ENCODE measurements at regions of chr6 and their contacts with region 1.

Region 1: GRCh38 chr6:73566954-73567591 is 46.2 kb upstream of the EEF1A1 start:
- DNase-seq: peak; percentile 96
- ATAC-seq: peak; percentile 86
- H3K4me3 ChIP-seq: peak overlapping the region; percentile 31 to 59 (median 32); a peak in 5 of 6 replicates
- H3K27ac ChIP-seq: peak overlapping the region; percentile 90
- H3K4me1 ChIP-seq: peaks cover 61% of the 10 kb centered on the region
- H3K27me3 ChIP-seq: no peaks in the 10 kb centered on the region
- CTCF ChIP-seq: no peak
- EP300 ChIP-seq: peak; percentile 77 to 83; a peak in 3 of 4 replicates
- POLR2A ChIP-seq: peak; percentile 66 to 67
- RAD21 ChIP-seq: no peak

Region 2: GRCh38 chr6:73481969-73482368 is 85.1 kb before region 1 on chr6:
- CTCF ChIA-PET with region 1: no interaction called
- POLR2A ChIA-PET with region 1: no interaction called
- in situ Hi-C with region 1: no loop called
- intact Hi-C with region 1: no loop called
- DNase-seq: no peak
- ATAC-seq: no peak
- H3K4me3 ChIP-seq: no peak overlapping the region
- H3K27ac ChIP-seq: no peak overlapping the region
- H3K4me1 ChIP-seq: no peaks in the 10 kb centered on the region
- H3K27me3 ChIP-seq: no peaks in the 10 kb centered on the region
- CTCF ChIP-seq: no peak
- EP300 ChIP-seq: no peak
- POLR2A ChIP-seq: no peak
- RAD21 ChIP-seq: no peak

Region 3: GRCh38 chr6:73515204-73515655 is 51.8 kb before region 1 on chr6:
- CTCF ChIA-PET with region 1: no interaction called
- POLR2A ChIA-PET with region 1: interaction called, 130 read pairs
- in situ Hi-C with region 1: no loop called
- intact Hi-C with region 1: loop called (anchors 5 kb)
- DNase-seq: no peak
- ATAC-seq: no peak
- H3K4me3 ChIP-seq: no peak overlapping the region
- H3K27ac ChIP-seq: peak overlapping the region; percentile 15
- H3K4me1 ChIP-seq: peaks cover 26% of the 10 kb centered on the region
- H3K27me3 ChIP-seq: no peaks in the 10 kb centered on the region; a peak in 1 of 5 replicates
- CTCF ChIP-seq: no peak
- EP300 ChIP-seq: no peak
- POLR2A ChIP-seq: no peak; a peak in 2 of 4 replicates
- RAD21 ChIP-seq: no peak

Region 4: DNA sequence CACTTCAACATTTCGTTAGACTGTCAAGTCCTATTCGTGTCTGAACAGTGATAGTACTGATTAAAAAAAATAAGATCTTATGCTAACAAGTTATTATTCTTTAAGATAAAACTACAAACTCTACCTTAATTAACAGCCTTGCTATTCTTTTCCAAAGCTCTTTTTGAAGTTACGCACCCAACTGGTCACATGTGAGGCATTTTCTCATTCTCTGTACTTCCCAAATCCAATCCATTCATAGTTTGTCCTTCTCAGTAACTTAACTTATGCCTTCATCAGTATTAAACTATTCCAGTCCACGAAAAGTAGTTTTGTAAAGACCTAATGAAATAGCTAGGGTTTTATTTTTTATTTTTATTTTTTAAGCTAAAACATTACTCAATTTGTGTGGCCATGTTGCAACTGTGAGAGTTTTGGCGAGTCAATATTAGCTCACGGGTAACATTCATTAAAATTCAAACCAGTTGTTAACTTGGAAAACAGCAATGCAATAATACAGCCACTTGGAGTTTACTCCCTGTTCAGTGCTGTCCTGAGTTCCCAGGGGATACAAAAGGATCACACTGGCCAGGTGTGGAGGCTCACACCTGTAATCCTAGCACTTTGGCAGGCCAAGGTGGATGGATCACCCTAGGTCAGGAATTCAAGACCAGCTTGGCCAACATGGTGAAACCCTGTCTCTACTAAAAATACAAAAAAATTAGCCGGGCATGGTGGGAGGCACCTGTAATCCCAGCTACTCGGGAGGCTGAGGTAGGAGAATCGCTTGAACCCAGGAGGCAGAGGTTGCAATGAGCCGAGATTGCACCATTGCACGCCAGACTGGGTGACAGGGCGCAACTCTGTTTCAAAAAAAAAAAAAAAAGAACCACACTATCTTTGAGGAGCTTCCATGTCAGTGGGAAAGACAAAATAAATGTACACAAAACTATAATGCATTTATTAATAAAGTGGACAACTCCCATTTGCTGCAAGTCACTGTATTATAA is 18.3 kb before region 1 on chr6:
- CTCF ChIA-PET with region 1: no interaction called
- POLR2A ChIA-PET with region 1: interaction called, 20 read pairs
- in situ Hi-C with region 1: no loop called
- intact Hi-C with region 1: no loop called
- DNase-seq: peak; percentile 52
- ATAC-seq: peak; percentile 93
- H3K4me3 ChIP-seq: no peak overlapping the region
- H3K27ac ChIP-seq: peak overlapping the region; percentile 45
- H3K4me1 ChIP-seq: peaks cover 22% of the 10 kb centered on the region
- H3K27me3 ChIP-seq: no peaks in the 10 kb centered on the region
- CTCF ChIP-seq: no peak
- EP300 ChIP-seq: no peak
- POLR2A ChIP-seq: no peak
- RAD21 ChIP-seq: no peak

Region 5: DNA sequence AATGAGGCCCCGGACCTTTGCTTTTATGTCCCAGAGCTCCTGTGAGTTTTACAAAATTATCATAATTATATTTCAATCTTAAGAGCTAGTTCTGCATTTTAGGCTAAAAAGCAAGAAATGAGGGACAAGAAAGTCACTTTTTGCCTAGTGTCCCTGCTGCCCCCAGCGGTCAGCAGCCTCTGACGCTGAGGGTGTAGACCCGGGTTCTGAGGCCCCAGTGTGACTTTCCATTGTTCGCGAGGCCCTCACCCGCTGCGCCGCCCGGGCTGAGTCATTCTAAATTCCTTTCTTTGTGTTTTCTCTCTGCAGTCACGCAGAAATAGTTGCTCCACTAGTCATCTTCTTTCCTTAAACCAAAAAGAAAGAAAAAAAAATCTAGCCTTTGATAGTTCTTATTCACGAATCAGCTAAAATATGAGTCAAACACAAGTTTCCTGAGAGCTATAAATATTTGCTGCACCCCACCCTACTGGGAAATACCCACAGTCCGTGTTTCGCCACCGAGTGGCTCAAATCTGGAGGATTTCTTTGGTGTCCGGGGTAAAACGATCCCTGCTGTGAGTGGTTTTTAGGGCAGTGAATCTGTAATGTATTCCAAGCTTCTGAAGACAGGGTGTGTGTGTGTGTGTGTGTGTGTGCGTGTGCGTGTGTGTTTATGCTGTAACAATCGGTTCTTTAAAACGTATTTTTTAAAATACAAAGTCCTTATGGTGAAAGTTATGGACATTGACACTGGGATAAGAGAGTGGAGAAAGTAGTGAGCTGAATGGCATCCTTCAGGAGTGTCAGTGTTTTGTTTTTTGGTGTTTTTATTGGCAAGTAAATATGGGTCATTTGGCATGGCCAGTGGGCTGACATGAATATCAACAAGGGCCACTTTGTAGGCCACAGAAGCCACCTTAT is 13.4 kb after region 1 on chr6:
- CTCF ChIA-PET with region 1: no interaction called
- POLR2A ChIA-PET with region 1: interaction called, 74 read pairs
- in situ Hi-C with region 1: no loop called
- intact Hi-C with region 1: loop called (anchors 1 kb)
- DNase-seq: peak; percentile 93
- ATAC-seq: peak; percentile 96
- H3K4me3 ChIP-seq: peak overlapping the region; percentile 45 to 67 (median 63)
- H3K27ac ChIP-seq: peak overlapping the region; percentile 99
- H3K4me1 ChIP-seq: peaks cover 50% of the 10 kb centered on the region
- H3K27me3 ChIP-seq: no peaks in the 10 kb centered on the region; a peak in 1 of 5 replicates
- CTCF ChIP-seq: peak; percentile 70
- EP300 ChIP-seq: peak in 1 of 2 experiments; percentile 83; a peak in 1 of 4 replicates
- POLR2A ChIP-seq: 0 out of 4 replicates have a peak, but pooled peaks of 1 of the 2 experiments have one; percentile 30
- RAD21 ChIP-seq: peak; percentile 55; the same call in 1 of the 2 replicates

Region 6: GRCh38 chr6:73585566-73586415 is 18.7 kb after region 1 on chr6:
- CTCF ChIA-PET with region 1: no interaction called
- POLR2A ChIA-PET with region 1: interaction called, 74 read pairs
- in situ Hi-C with region 1: no loop called
- intact Hi-C with region 1: loop called (anchors 1 kb)
- DNase-seq: peak; percentile 88
- ATAC-seq: peak; percentile 69
- H3K4me3 ChIP-seq: peak overlapping the region; percentile 42 to 51 (median 44)
- H3K27ac ChIP-seq: peak overlapping the region; percentile 86
- H3K4me1 ChIP-seq: peaks cover 32% of the 10 kb centered on the region
- H3K27me3 ChIP-seq: no peaks in the 10 kb centered on the region
- CTCF ChIP-seq: no peak
- EP300 ChIP-seq: peak in 1 of 2 experiments; percentile 95; a peak in 2 of 4 replicates
- POLR2A ChIP-seq: peak in 1 of 2 experiments; percentile 39; a peak in 1 of 4 replicates
- RAD21 ChIP-seq: no peak

Region 7: DNA sequence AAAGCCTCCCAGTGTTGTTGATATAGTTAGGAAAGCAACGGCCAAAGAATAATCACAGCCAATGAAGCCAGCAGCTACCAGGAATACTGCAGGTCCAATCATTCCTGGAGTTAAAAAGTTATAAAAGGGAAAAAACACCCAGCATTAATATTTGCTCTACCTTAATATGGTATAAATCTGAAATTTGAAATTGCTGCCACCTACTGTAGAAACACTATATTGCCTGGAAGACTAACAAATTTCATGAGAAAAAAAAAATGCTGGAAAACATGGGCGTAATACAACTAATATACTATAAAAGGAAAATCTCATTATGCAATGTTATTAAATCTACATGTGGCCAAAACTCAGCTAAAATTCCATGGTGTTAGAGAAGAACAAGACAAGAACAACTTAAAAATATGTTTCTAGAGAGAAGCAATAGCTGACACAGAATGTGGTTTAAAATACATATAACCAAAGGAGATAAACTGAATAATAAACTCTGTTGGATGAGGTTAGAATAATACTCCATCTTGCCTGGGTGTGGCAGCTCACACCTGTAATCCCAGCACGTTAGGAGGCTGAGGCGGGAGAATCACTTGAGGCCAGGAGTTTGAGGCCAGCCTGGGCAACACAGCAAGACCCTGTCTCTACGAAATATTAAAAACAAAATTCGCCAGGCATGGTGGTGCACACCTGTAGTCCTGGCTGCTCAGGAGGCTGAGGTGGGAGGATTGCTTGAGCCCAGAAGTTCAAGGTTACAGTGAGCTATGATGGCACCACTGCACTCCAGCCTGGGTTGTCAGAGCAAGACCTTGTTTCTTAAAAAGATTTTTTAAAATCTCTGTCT is 43.6 kb after region 1 on chr6:
- CTCF ChIA-PET with region 1: no interaction called
- POLR2A ChIA-PET with region 1: no interaction called
- in situ Hi-C with region 1: no loop called
- intact Hi-C with region 1: loop called (anchors 5 kb)
- DNase-seq: peak; percentile 52
- ATAC-seq: peak; percentile 51; the same call in 2 of the 3 replicates
- H3K4me3 ChIP-seq: no peak overlapping the region
- H3K27ac ChIP-seq: no peak overlapping the region
- H3K4me1 ChIP-seq: peaks cover 17% of the 10 kb centered on the region
- H3K27me3 ChIP-seq: no peaks in the 10 kb centered on the region
- CTCF ChIP-seq: peak; percentile 57
- EP300 ChIP-seq: no peak
- POLR2A ChIP-seq: no peak
- RAD21 ChIP-seq: peak; percentile 65

Measured in HepG2 (cell line).